Naive thymus-derived CD4-positive, alpha-beta T cell (primary cell): ENCODE measurements at regions of chr20 and their contacts with region 1.

Region 1: DNA sequence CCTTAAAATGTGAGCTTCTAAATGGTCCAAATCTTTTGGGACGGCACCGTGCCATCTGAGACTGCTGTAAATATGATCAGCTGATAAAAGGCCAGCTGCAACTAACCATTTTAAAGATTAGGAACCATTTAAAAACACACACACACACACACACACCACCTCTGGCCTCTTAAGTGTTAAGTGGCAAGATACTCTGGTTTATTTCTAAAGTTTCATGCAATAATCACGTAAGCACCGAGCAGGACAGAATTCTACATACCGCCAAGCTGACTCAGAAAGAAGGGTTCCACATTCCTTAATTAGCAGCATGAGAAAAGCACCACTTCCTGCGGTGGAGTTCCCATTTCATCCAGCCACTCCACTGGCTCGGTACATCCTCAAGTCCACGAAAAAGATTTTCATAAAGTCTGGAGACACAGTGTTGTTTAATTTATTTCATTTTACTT is 17.8 kb upstream of the ZNF217 start:
- DNase-seq: peak in 1 of 9 donors; percentile 15
- ATAC-seq: no peak
- H3K4me3 ChIP-seq: no peak overlapping the region
- H3K4me3 Mint-ChIP-seq: no peak overlapping the region
- H3K27ac ChIP-seq: peak overlapping the region; percentile 35
- H3K27ac Mint-ChIP-seq: peak overlapping the region in 8 of 9 donors; percentile 48 to 81 (median 76)
- H3K4me1 ChIP-seq: peaks cover 12 to 22% of the 10 kb centered on the region in 2 donors
- H3K4me1 Mint-ChIP-seq: peaks cover 10 to 46% (median 37%) of the 10 kb centered on the region in 7 donors
- H3K27me3 ChIP-seq: no peaks in the 10 kb centered on the region
- H3K27me3 Mint-ChIP-seq: no peaks in the 10 kb centered on the region

Region 2: GRCh38 chr20:53502820-53503219 is 108.7 kb before region 1 on chr20:
- CTCF ChIA-PET with region 1: no interaction called
- POLR2A ChIA-PET with region 1: no interaction called
- intact Hi-C with region 1: no loop called
- DNase-seq: no peak
- ATAC-seq: no peak
- H3K4me3 ChIP-seq: no peak overlapping the region
- H3K4me3 Mint-ChIP-seq: no peak overlapping the region
- H3K27ac ChIP-seq: no peak overlapping the region
- H3K27ac Mint-ChIP-seq: no peak overlapping the region
- H3K4me1 ChIP-seq: no peaks in the 10 kb centered on the region
- H3K4me1 Mint-ChIP-seq: no peaks in the 10 kb centered on the region
- H3K27me3 ChIP-seq: no peaks in the 10 kb centered on the region
- H3K27me3 Mint-ChIP-seq: peaks cover 0 to 12% (median 0%) of the 10 kb centered on the region in 5 donors

Region 3: DNA sequence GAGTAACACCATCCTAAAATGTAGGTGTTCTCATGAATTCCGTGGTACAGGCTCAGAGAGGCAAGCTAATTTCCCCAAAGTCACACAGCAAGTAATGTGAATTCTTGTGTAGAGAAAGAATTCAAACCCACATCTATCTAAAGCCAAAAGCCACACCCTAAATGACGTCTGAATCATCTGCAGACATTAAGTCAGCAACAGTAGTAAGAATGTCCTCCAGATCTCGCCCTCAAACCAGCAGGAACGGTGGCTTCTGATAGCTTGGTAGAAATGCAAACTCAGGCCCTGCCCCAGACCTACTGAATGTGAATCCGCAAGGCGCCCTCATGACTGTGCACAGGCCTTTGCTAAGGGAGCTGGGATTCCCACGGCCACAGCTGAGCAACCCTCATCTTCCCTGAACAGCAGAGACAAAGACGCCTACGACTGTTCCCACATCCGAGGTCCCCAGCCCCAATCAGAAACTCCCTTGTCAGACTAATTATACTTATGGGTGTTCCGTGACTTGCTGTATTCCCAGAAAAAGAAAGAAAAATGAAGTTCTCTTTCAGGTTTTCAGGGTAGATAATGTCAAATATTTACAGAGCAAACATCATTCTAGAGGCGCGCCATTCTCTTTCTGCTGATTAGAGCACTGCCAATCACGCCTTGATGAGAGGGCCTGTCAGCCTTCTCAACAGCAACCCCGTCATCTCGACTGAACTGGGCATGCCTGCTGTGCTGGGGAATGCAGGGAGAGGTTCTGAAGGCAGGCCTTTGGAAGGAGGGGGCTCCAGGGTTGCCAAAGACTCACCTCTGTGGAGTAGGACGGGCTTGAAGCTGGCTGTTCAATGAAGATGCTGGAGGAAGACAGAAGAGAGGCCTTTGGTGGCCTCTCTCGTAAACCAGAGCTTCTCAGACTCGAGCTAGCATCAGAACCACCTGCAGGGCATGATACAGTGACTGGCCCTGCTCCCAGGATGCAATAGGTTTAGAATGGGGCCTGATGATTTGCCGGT is 97.9 kb before region 1 on chr20:
- CTCF ChIA-PET with region 1: no interaction called
- POLR2A ChIA-PET with region 1: no interaction called
- intact Hi-C with region 1: no loop called
- DNase-seq: no peak
- ATAC-seq: no peak
- H3K4me3 ChIP-seq: no peak overlapping the region
- H3K4me3 Mint-ChIP-seq: no peak overlapping the region
- H3K27ac ChIP-seq: no peak overlapping the region
- H3K27ac Mint-ChIP-seq: no peak overlapping the region
- H3K4me1 ChIP-seq: no peaks in the 10 kb centered on the region
- H3K4me1 Mint-ChIP-seq: no peaks in the 10 kb centered on the region
- H3K27me3 ChIP-seq: no peaks in the 10 kb centered on the region
- H3K27me3 Mint-ChIP-seq: peaks cover 0 to 3% (median 0%) of the 10 kb centered on the region in 5 donors

Region 4: GRCh38 chr20:53594068-53595017 is 17.1 kb before region 1 on chr20:
- CTCF ChIA-PET with region 1: interaction called, 6 read pairs
- POLR2A ChIA-PET with region 1: interaction called, 136 read pairs
- intact Hi-C with region 1: loop called (anchors 1 kb)
- DNase-seq: peak; percentile 93 to 100 (median 96)
- ATAC-seq: peak; percentile 90
- H3K4me3 ChIP-seq: peak overlapping the region; percentile 81
- H3K4me3 Mint-ChIP-seq: peak overlapping the region; percentile 89 to 99 (median 92)
- H3K27ac ChIP-seq: peak overlapping the region; percentile 97
- H3K27ac Mint-ChIP-seq: peak overlapping the region; percentile 90 to 98 (median 97)
- H3K4me1 ChIP-seq: peaks cover 14 to 21% of the 10 kb centered on the region in 2 donors
- H3K4me1 Mint-ChIP-seq: peaks cover 23 to 66% (median 54%) of the 10 kb centered on the region in 7 donors
- H3K27me3 ChIP-seq: no peaks in the 10 kb centered on the region
- H3K27me3 Mint-ChIP-seq: no peaks in the 10 kb centered on the region

Region 5: GRCh38 chr20:53635221-53635924 is 23.9 kb after region 1 on chr20:
- CTCF ChIA-PET with region 1: interaction called, 4 read pairs
- POLR2A ChIA-PET with region 1: interaction called, 14 read pairs
- intact Hi-C with region 1: no loop called
- DNase-seq: no peak
- ATAC-seq: peak; percentile 54
- H3K4me3 ChIP-seq: no peak overlapping the region
- H3K4me3 Mint-ChIP-seq: peak overlapping the region in 4 of 10 donors; percentile 4 to 67 (median 15)
- H3K27ac ChIP-seq: no peak overlapping the region
- H3K27ac Mint-ChIP-seq: peak overlapping the region; percentile 14 to 78 (median 49)
- H3K4me1 ChIP-seq: peaks cover 0 to 8% of the 10 kb centered on the region in 2 donors
- H3K4me1 Mint-ChIP-seq: peaks cover 33 to 55% (median 45%) of the 10 kb centered on the region in 7 donors
- H3K27me3 ChIP-seq: no peaks in the 10 kb centered on the region
- H3K27me3 Mint-ChIP-seq: no peaks in the 10 kb centered on the region

Region 6: DNA sequence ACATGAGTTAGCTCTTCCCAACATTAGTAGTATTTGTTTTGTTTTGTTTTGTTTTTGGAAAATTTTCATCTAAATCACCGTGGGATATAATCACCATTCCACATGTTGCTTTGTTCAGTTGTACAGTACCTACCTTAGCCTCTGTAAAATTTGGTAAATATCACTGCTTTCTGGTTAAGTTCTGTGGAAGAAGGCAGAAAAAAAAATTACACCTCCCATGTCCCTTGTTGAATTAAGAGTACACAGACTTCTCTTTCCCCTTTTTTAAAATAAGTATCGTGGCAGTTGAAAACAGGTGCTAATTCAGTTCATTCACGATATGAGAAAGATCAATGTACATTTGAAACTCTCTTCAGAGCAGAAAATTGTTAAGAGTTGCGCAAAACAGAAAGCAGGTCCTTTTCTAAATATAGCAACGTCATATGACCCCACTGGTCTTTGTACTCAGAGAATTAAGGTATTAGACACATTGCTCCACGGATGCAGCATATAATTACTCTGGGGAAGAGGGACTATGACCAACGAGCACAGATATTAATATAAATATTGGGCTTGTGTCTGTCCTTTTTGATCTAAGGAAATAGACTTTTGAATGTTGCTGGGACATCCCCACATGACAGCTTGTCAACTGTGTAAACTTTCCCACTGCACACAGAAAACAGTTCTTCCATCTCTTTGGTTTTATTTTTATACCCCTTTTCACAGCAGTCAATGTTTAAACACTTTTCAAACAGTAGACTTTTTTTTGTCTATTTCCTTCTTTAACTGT is 40.8 kb after region 1 on chr20:
- CTCF ChIA-PET with region 1: no interaction called
- POLR2A ChIA-PET with region 1: interaction called, 52 read pairs
- intact Hi-C with region 1: loop called in 1 of 2 experiments (anchors 1 kb)
- DNase-seq: peak in 7 of 9 donors; percentile 34 to 61 (median 46)
- ATAC-seq: peak; percentile 85
- H3K4me3 ChIP-seq: peak overlapping the region; percentile 22
- H3K4me3 Mint-ChIP-seq: peak overlapping the region; percentile 25 to 86 (median 73)
- H3K27ac ChIP-seq: peak overlapping the region; percentile 72
- H3K27ac Mint-ChIP-seq: peak overlapping the region; percentile 88 to 97 (median 95)
- H3K4me1 ChIP-seq: peaks cover 21 to 32% of the 10 kb centered on the region in 2 donors
- H3K4me1 Mint-ChIP-seq: peaks cover 23 to 50% (median 43%) of the 10 kb centered on the region in 7 donors
- H3K27me3 ChIP-seq: no peaks in the 10 kb centered on the region
- H3K27me3 Mint-ChIP-seq: no peaks in the 10 kb centered on the region